ENCODE measurements at regions of chr3 and their contacts with region 1.

Region 1: DNA sequence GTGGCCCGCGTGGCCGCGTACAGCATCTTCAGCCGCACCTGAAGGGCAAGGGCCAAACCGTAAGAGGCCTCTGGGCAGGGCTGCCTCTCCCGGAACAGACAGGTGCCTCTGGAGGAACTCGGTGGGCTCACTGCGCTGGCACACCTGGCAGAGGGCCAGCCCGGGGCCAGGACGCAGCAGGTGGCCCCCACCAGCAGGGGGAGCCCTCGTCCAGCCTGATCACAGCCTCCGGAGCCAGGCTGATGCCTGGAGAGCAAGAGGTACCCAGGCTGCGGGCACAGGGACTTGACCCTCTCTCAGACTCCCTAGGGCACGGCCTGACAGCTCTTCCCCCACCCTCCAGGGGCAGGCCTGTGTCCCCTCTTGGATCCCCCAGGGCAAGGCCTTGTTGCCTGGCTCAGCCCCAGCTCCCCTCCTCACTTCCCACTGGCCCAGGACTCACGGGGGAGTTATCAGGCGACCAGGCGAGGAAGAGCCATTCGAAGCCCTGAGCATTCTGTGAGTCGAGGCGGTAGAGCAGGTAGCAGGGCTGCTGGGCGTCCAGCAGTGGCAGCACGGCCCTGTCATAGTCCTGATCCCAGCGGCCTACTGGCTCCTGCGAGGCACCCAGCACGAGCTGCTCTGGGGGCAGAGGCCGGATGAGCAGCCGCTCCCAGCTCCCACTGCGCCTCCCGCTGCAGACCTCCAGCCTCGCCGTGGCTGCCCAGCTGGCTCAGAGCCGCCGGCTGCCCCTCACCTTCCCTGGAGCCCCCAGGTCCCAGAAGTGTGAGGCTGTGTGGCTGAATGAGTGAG is 6.3 kb upstream of the TLR9 start:
- DNase-seq: peak; percentile 72 to 91 (median 80)
- ATAC-seq: peak in 3 of 4 donors; percentile 8 to 37 (median 37)
- H3K4me3 ChIP-seq: peak overlapping the region in 6 of 12 donors; percentile 0 to 59 (median 24)
- H3K27ac ChIP-seq: peak overlapping the region in 2 of 12 donors; percentile 4 to 33
- H3K4me1 ChIP-seq: peaks cover 0 to 51% (median 31%) of the 10 kb centered on the region in 12 donors
- H3K27me3 ChIP-seq: no peaks in the 10 kb centered on the region
- CTCF ChIP-seq: peak; percentile 80 to 92 (median 83)
- POLR2A ChIP-seq: no peak

Region 2: GRCh38 chr3:52291508-52292181 is 59.9 kb after region 1 on chr3:
- intact Hi-C with region 1: loop called in 2 of 10 experiments (anchors 5 kb)
- DNase-seq: no peak
- ATAC-seq: no peak
- H3K4me3 ChIP-seq: no peak overlapping the region
- H3K27ac ChIP-seq: no peak overlapping the region
- H3K4me1 ChIP-seq: peaks cover 0 to 20% (median 11%) of the 10 kb centered on the region in 12 donors
- H3K27me3 ChIP-seq: no peaks in the 10 kb centered on the region
- CTCF ChIP-seq: peak; percentile 38 to 60 (median 52)
- POLR2A ChIP-seq: no peak

Region 3: GRCh38 chr3:52302426-52303145 is 70.9 kb after region 1 on chr3:
- intact Hi-C with region 1: no loop called
- DNase-seq: no peak
- ATAC-seq: no peak
- H3K4me3 ChIP-seq: no peak overlapping the region
- H3K27ac ChIP-seq: no peak overlapping the region
- H3K4me1 ChIP-seq: peaks cover 0 to 28% (median 14%) of the 10 kb centered on the region in 12 donors
- H3K27me3 ChIP-seq: no peaks in the 10 kb centered on the region
- CTCF ChIP-seq: no peak
- POLR2A ChIP-seq: no peak

Measured in heart left ventricle (tissue), 16 donors.